Activated B cell treated with CpG ODN at 0.5 μM for 24 hours (primary cell): ENCODE measurements at regions of chr21 and their contacts with region 1.

Region 1: DNA sequence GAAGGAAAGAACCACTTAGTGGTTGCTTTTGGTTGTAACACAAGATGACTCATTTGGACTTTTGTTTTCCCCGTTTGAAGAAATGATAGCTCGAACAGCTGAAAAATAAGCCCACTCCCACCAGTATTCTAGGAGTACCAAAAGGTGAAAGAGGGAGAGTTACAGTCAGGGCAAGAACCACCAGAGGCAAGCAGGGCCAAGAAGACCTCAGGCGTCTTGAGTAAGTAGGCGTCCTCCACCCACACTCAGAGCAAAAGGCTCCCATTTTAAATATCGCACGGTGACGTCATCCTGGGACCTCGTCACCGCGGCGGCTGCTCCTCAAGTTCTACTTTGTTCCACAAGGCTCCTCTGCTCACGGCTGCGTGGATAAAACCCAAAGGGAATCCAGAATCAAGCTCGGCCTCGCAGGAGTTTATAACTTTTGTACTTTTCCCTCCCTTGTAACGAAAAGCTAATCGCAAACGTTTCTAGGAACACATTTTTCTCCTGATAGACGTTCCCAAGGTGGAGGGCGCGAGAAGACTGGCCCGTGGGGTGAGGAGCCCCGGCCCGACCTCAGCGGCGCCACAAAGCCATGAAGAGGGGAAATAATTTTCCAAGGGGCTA is 1.2 kb downstream of the BTG3 start:
- DNase-seq: peak; percentile 62
- ATAC-seq: peak; percentile 47
- H3K4me3 Mint-ChIP-seq: peak overlapping the region; percentile 93
- H3K27ac Mint-ChIP-seq: peak overlapping the region; percentile 94
- H3K4me1 Mint-ChIP-seq: peaks cover 18% of the 10 kb centered on the region
- H3K27me3 Mint-ChIP-seq: no peaks in the 10 kb centered on the region
- CTCF ChIP-seq: no peak

Region 2: DNA sequence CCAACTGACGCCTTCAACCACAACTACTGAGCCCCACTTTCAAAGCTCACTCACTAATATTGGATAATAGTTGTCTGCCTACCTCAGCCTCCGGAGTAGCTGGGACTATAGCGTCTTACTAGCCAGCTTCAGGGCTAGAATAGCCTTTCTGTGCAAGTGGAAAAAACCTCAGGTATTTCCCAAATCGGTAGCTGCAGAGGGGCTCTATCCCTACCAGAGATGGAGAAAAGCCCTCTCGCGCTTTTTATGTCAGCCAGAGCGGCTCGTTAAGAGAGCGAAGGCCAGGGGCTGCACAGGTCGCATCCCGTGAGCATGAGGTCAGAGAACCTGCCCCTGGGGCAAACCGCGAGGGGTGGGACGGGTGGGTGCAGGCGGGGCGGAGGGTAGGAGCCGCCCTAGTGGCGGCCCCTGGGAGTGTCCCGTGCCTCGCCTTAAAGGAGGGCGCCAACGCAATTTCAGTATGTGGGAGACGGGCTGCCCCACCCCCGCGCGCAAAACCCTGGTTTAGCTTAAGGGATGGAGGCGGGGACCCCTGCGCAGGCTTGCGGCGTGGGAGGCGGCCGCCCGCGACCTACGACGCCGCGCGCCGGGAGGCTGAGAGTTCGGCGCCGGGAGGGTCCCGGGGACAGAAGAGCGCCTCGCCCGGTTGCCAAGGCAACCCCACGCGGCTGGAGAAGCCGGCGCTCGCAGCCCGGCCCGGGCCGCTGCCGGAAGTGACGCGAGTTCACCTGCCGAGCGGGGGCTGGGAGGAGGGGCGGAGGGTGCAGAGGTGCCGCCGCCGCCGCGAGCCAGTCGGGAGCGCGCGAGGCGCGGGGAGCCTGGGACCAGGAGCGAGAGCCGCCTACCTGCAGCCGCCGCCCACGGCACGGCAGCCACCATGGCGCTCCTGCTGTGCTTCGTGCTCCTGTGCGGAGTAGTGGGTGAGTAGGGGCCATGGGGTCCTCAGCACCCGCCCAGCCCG is 99.0 kb before region 1 on chr21 and contains the start of gene CXADR:
- CTCF ChIA-PET with region 1: no interaction called
- POLR2A ChIA-PET with region 1: no interaction called
- intact Hi-C with region 1: loop called (anchors 5 kb)
- DNase-seq: peak; percentile 42
- ATAC-seq: peak; percentile 68
- H3K4me3 Mint-ChIP-seq: peak within 1 kb of the TSS; percentile 83
- H3K27ac Mint-ChIP-seq: no peak within 1 kb of the TSS
- H3K4me1 Mint-ChIP-seq: peaks cover 19% of the 10 kb centered on the region
- H3K27me3 Mint-ChIP-seq: peaks cover 35% of the 10 kb centered on the region
- CTCF ChIP-seq: no peak
- total RNA-seq, gene CXADR: not detected in 2 replicates

Region 3: GRCh38 chr21:17585875-17586450 is 25.6 kb before region 1 on chr21:
- CTCF ChIA-PET with region 1: no interaction called
- POLR2A ChIA-PET with region 1: no interaction called
- intact Hi-C with region 1: loop called (anchors 2 kb)
- DNase-seq: no peak
- ATAC-seq: no peak
- H3K4me3 Mint-ChIP-seq: no peak overlapping the region
- H3K27ac Mint-ChIP-seq: no peak overlapping the region
- H3K4me1 Mint-ChIP-seq: no peaks in the 10 kb centered on the region
- H3K27me3 Mint-ChIP-seq: peaks cover 2% of the 10 kb centered on the region
- CTCF ChIP-seq: no peak

Region 4: DNA sequence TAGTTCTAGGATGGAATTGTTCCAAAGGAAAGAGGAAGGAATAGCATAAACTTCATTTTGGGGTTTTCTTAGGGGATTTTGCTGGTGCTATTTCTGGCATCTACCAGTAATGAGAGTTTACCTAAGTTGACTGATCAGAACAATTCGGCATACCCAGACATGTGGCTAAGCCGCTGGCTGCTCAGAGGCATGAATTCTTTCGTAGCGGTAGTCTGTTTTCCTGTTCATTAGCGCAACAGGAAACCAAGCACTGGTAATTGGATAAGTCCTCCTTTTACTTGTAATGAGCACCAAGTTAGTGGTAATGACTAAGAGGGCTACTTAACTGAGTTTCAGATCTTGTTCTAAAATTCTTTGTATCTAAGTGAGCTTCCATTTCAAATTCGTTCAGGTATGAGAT is 169.0 kb after region 1 on chr21:
- CTCF ChIA-PET with region 1: no interaction called
- POLR2A ChIA-PET with region 1: no interaction called
- intact Hi-C with region 1: loop called (anchors 2 kb)
- DNase-seq: no peak
- ATAC-seq: peak; percentile 45
- H3K4me3 Mint-ChIP-seq: peak overlapping the region; percentile 55
- H3K27ac Mint-ChIP-seq: peak overlapping the region; percentile 75
- H3K4me1 Mint-ChIP-seq: peaks cover 81% of the 10 kb centered on the region
- H3K27me3 Mint-ChIP-seq: no peaks in the 10 kb centered on the region
- CTCF ChIP-seq: no peak